Activated T-helper 2 cell treated with anti-CD3 and anti-CD28 coated beads, Interferon-gamma antibody, Interleukin-2, Interleukin-4, amounts not matched to agents 10 μg/mL and 5 μg/mL and 100 μg/mL, durations not matched to agents 14 hours and 24 hours and 36 hours (primary cell): ENCODE measurements at regions of chrX and their contacts with region 1.

Region 1: DNA sequence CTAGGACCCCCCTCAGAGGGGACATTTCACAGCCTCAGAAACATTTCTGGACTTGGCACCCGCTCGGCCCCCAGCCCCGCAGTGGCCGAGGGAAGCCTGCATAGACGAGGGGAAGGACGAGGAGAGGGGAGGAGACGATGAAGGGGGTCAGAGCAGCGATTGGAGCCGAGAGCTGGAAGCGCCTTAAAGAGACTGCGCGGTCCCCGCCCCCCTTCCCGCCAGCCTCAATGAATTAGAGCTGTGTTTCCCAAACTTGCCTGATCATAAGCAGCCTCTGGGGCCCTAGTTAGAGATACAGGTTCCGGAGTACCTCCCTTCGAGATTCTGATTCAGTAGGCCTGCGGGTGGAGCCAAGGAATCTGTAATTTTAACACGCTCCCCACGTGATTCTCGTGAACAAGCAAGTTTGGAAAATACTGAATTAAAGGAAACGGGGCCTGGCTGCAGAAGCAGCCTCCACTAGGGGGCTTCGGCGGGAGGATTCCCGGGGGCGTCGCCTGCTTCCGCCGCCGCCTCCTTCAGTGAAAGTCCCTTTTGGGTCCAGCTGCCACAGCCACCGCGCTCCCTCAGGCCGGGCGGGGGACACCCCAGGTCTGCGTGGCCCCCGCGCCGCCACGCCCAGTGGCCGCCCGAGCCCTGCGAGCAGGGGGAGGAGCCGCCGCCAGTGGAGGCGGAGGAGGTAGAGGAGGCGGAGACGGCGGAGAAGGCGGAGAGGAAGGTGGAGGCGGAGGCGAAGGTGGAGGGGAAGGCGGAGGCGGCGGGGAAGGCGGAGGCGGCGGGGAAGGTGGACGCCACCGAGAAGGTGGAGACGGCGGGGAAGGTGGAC is at the start of gene USP27X:
- DNase-seq: peak; percentile 77
- H3K4me3 Mint-ChIP-seq: peak within 1 kb of the TSS; percentile 76
- H3K27ac Mint-ChIP-seq: peak within 1 kb of the TSS; percentile 62
- H3K4me1 Mint-ChIP-seq: peaks cover 12% of the 10 kb centered on the region
- H3K27me3 Mint-ChIP-seq: peaks cover 3% of the 10 kb centered on the region
- total RNA-seq, gene USP27X: 1.7 TPM in 2 replicates

Region 2: GRCh38 chrX:49761481-49761880 is 117.6 kb before region 1 on chrX:
- intact Hi-C with region 1: loop called (anchors 2 kb)
- DNase-seq: no peak
- H3K4me3 Mint-ChIP-seq: no peak overlapping the region
- H3K27ac Mint-ChIP-seq: no peak overlapping the region
- H3K4me1 Mint-ChIP-seq: no peaks in the 10 kb centered on the region
- H3K27me3 Mint-ChIP-seq: peaks cover 9% of the 10 kb centered on the region

Region 3: GRCh38 chrX:49922291-49923241 is 43.5 kb after region 1 on chrX and contains the start of gene CLCN5:
- intact Hi-C with region 1: loop called (anchors 1 kb)
- DNase-seq: peak; percentile 92
- H3K4me3 Mint-ChIP-seq: peak within 1 kb of the TSS; percentile 77
- H3K27ac Mint-ChIP-seq: peak within 1 kb of the TSS; percentile 42
- H3K4me1 Mint-ChIP-seq: peaks cover 15% of the 10 kb centered on the region
- H3K27me3 Mint-ChIP-seq: no peaks in the 10 kb centered on the region
- total RNA-seq, gene CLCN5: 4.5 and 5.6 TPM in 2 replicates

Region 4: DNA sequence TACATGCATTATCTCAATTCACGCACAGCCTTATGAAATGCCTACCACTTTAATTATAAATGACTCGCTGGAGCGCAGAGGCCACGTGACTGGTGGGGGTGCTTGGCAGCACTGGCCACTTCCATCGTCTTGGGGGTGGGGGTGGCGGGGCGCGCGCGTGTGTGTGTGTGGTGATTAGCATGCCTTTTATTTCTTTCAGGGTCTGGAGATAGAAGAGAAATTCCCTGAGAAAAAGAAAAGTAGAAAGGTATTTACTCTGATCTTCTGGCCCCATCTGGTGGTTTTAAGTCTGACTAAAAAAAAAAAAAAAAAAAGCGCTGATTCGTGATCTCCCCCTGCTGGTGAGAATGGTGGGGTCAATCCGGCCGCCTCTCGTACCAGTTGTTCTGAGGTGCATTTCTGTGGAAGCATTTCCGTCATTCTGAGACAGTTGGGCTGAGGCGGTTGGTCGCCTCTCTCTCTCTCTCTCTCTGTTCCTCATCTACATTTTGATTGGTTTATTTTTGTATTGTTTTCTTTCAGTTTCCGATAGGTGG is 325.4 kb after region 1 on chrX and contains the start of gene CCNB3:
- intact Hi-C with region 1: loop called (anchors 1 kb)
- DNase-seq: peak; percentile 66
- H3K4me3 Mint-ChIP-seq: peak within 1 kb of the TSS; percentile 78
- H3K27ac Mint-ChIP-seq: peak within 1 kb of the TSS; percentile 83
- H3K4me1 Mint-ChIP-seq: peaks cover 11% of the 10 kb centered on the region
- H3K27me3 Mint-ChIP-seq: no peaks in the 10 kb centered on the region
- total RNA-seq, gene CCNB3: 0.55 and 1.3 TPM in 2 replicates